Mammary epithelial cell (primary cell): ENCODE measurements at regions of chr1 and their contacts with region 1.

Region 1: DNA sequence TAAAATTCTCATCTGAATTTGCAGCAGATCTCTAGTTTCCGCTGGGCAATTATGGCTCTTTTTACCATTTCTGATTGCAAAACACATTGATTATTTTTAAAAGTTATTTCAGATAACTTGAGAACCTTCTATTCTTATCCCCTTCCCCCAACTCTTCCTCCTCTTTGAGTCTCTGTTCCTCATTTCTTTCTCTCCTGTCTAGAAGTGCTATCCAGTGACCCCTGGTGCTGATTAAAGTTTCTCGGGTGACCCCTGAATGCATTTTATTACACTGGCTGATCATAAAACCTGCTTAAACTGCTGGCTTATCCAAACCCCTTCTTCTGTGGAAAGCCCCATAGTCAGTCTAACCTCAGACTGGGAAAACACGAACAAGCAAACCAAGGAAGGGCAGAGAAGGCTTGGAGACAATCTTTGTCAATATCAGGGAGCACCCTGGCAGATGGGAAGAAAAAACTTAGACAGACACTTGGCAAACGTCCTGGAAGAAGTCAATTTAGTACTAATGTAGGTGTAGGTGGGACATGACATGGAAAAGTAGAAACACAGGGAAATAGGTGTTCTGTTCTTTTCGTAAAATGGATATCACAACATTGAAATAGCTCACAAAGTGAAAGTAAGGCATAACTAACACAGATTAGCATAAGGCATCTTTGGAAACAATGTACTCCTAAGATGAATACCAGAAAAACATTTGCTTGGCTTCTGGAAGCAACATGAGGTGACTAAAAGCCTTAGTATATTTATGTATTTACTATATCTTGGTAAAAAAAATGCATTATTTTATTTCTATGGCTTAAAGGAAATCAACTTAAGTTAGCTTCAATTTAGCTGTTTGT is 61.4 kb downstream of the GORAB start:
- DNase-seq: no peak
- H3K4me3 ChIP-seq: no peak overlapping the region
- H3K27ac ChIP-seq: no peak overlapping the region
- H3K4me1 ChIP-seq: no peaks in the 10 kb centered on the region
- H3K27me3 ChIP-seq: no peaks in the 10 kb centered on the region
- CTCF ChIP-seq: no peak

Region 2: DNA sequence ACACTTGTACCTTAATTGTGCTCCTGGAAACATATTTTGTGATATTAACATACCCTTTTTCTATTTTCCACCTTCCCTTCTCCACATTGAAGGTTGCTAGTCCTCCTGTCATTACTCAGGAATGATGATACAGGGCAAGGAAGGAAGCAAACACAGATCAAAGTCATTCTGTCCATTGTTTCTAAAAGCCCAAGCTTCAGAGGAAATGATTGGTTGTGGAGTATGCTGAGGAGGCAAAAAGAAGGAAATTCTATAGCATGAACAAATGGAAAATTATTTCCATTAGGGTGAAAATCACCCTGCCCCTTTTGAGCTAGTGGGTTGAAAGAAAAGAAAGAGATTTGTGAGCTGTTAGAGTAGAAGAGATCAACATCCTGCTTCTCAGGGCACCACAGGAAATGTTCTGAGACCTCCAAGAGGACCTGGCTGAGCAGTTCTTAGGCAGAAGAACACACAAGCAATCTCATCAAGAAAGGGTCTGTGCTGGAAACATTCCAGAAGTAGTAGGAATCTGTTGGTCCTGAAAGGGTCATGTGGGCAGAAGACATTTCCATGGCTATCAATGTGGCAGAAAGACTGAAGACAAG is 41.5 kb after region 1 on chr1:
- CTCF ChIA-PET with region 1: no interaction called
- dilution Hi-C with region 1: loop called (anchors 5 kb)
- in situ Hi-C with region 1: no loop called
- intact Hi-C with region 1: no loop called
- DNase-seq: no peak
- H3K4me3 ChIP-seq: no peak overlapping the region
- H3K27ac ChIP-seq: no peak overlapping the region
- H3K4me1 ChIP-seq: no peaks in the 10 kb centered on the region
- H3K27me3 ChIP-seq: no peaks in the 10 kb centered on the region
- CTCF ChIP-seq: no peak